Colonic mucosa (tissue), 4 donors: ENCODE measurements at regions of chr19 and their contacts with region 1.

Region 1: GRCh38 chr19:5057861-5058260 is 88.9 kb downstream of the KDM4B start:
- DNase-seq: no peak
- H3K4me3 ChIP-seq: no peak overlapping the region
- H3K27ac ChIP-seq: no peak overlapping the region
- H3K4me1 ChIP-seq: no peaks in the 10 kb centered on the region
- H3K27me3 ChIP-seq: no peaks in the 10 kb centered on the region
- CTCF ChIP-seq: no peak

Region 2: GRCh38 chr19:4933528-4933927 is 124.3 kb before region 1 on chr19:
- intact Hi-C with region 1: no loop called
- DNase-seq: no peak
- H3K4me3 ChIP-seq: no peak overlapping the region
- H3K27ac ChIP-seq: no peak overlapping the region
- H3K4me1 ChIP-seq: no peaks in the 10 kb centered on the region
- H3K27me3 ChIP-seq: no peaks in the 10 kb centered on the region
- CTCF ChIP-seq: no peak

Region 3: DNA sequence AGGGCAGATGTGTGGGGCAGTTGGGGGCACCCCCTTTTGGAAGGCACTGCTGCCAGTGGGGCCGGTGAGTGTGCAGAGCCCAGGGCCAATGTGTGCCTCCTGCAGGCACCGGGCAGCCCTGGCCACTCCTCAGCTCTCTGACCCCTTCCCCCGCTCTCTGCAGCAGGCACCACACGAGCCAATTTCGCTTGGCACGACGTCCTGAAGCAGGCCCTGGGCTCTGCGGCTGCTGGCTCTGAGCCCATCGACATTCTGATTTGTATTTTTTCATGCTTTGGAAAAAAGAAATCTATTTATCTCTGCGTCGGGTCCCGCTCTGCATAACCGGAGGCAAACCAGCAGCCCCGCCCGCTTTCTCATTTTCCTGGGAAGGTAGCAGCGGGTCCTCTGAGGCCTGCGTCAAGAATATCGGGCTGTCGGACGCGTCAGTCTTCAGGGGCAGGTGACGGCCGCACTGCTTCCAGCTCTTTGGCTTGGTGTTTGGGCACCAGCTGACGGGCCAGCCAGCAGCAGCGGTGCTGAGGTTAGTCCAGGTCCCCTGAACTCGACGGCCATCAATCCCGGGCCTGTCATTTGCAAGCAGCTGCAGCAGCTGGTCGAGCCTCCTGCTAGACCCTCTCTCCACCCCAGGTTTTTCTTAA is 45.3 kb after region 1 on chr19:
- intact Hi-C with region 1: no loop called
- DNase-seq: no peak
- H3K4me3 ChIP-seq: no peak overlapping the region
- H3K27ac ChIP-seq: no peak overlapping the region
- H3K4me1 ChIP-seq: no peaks in the 10 kb centered on the region
- H3K27me3 ChIP-seq: no peaks in the 10 kb centered on the region
- CTCF ChIP-seq: no peak

Region 4: DNA sequence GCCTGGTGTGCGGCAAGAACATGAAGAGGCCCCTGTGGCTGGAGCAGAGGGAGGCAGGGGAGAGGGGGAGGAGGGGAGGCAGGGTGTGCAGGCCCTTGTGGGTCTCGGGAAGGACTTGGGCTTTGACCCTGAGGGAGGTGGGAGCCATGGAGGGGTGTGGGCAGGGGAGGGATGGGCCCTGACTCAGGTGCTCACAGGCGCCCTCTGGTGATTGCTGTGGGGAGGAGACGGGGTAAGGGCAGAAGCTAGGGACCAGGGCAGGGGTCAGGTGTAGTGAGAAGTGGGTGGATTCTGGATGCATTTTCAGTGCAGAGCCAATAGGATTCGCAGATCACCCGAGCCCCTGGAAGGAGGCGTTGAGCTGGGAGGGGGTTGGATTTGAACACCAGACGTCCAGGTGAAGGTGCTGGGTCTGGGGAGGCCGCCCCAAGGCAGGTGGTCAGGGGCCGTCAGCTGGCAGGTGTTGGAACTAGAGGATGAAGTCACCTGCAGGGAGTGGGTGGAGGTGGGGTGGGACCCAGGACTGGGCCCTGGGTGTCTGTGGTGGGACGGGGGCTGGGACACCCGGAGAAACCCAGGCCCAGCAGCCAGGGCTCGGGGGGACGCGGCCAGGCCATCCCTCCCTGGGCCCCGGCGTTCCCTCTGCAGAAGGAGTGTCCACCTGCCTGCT is 96.4 kb after region 1 on chr19:
- intact Hi-C with region 1: loop called (anchors 10 kb)
- DNase-seq: peak; percentile 49
- H3K4me3 ChIP-seq: no peak overlapping the region
- H3K27ac ChIP-seq: no peak overlapping the region
- H3K4me1 ChIP-seq: no peaks in the 10 kb centered on the region
- H3K27me3 ChIP-seq: no peaks in the 10 kb centered on the region
- CTCF ChIP-seq: peak; percentile 22